ENCODE measurements at regions of chr9 and their contacts with region 1.

Region 1: DNA sequence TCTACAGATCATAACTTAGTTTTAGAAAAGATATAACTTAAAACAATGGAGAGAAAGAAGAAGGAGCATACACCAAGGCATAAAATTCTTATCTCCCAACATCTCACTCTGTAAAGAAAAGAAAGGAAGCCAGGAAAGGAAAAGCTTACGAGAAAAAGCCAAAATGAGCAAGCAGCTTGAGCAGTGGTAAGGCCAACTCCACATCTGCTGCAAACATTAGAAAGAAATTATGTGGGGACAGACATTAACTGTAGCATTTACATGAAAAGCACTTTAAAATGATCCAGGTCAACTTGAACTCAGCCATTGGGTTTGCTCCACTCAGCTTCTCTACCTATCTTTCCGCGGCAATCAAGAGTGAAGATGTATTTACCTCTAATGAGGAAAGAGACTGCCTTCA is 176.9 kb downstream of the BNC2 start:
- DNase-seq: no peak
- ATAC-seq: no peak

Region 2: GRCh38 chr9:16671591-16672137 is 22.0 kb before region 1 on chr9:
- intact Hi-C with region 1: loop called (anchors 2 kb)
- DNase-seq: no peak
- ATAC-seq: no peak

Region 3: DNA sequence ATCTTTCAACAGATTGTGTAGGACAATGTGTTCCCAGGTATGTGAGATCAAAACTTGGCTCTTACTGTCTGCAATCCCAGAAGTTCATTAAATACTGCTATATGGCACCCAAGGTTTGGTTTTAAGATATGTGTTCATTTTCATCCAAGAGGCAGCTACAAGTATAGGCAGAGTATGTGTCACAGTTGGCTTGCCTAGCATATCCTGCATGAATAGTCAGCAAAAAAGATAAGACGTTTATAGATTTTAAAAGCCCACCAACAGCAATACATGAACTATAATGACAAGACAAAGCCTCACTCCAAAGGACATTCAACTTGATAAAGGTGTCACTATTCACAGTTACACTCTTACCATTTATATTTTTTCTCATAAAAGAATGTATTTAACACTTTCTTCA is 77.7 kb after region 1 on chr9:
- intact Hi-C with region 1: no loop called
- DNase-seq: no peak
- ATAC-seq: no peak